B cell (primary cell): ENCODE measurements at regions of chr22 and their contacts with region 1.

Region 1: GRCh38 chr22:38353142-38353629 is 36.0 kb upstream of the CSNK1E start:
- DNase-seq: peak; percentile 78
- ATAC-seq: peak; percentile 91
- H3K4me3 ChIP-seq: no peak overlapping the region
- H3K4me3 Mint-ChIP-seq: no peak overlapping the region
- H3K27ac ChIP-seq: peak overlapping the region in 1 of 2 donors; percentile 5
- H3K27ac Mint-ChIP-seq: no peak overlapping the region
- H3K4me1 ChIP-seq: peaks cover 0 to 6% of the 10 kb centered on the region in 2 donors
- H3K4me1 Mint-ChIP-seq: peaks cover 12% of the 10 kb centered on the region
- H3K27me3 ChIP-seq: no peaks in the 10 kb centered on the region
- H3K27me3 Mint-ChIP-seq: no peaks in the 10 kb centered on the region
- CTCF ChIP-seq: peak; percentile 97

Region 2: GRCh38 chr22:38214256-38215056 is 138.7 kb before region 1 on chr22:
- CTCF ChIA-PET with region 1: interaction called, 3 read pairs
- POLR2A ChIA-PET with region 1: no interaction called
- intact Hi-C with region 1: loop called (anchors 2 kb)
- DNase-seq: peak; percentile 82
- ATAC-seq: peak; percentile 84
- H3K4me3 ChIP-seq: peak overlapping the region in 4 of 5 experiments; percentile 20 to 51 (median 34)
- H3K4me3 Mint-ChIP-seq: peak overlapping the region; percentile 78
- H3K27ac ChIP-seq: no peak overlapping the region
- H3K27ac Mint-ChIP-seq: peak overlapping the region; percentile 15
- H3K4me1 ChIP-seq: peaks cover 5 to 18% of the 10 kb centered on the region in 2 donors
- H3K4me1 Mint-ChIP-seq: peaks cover 19% of the 10 kb centered on the region
- H3K27me3 ChIP-seq: no peaks in the 10 kb centered on the region
- H3K27me3 Mint-ChIP-seq: no peaks in the 10 kb centered on the region
- CTCF ChIP-seq: peak; percentile 37

Region 3: GRCh38 chr22:38262051-38262795 is 91.0 kb before region 1 on chr22:
- CTCF ChIA-PET with region 1: interaction called, 4 read pairs
- POLR2A ChIA-PET with region 1: no interaction called
- intact Hi-C with region 1: loop called (anchors 1 kb)
- DNase-seq: peak; percentile 53
- ATAC-seq: peak; percentile 24
- H3K4me3 ChIP-seq: no peak overlapping the region
- H3K4me3 Mint-ChIP-seq: no peak overlapping the region
- H3K27ac ChIP-seq: no peak overlapping the region
- H3K27ac Mint-ChIP-seq: peak overlapping the region; percentile 33
- H3K4me1 ChIP-seq: peaks cover 3 to 26% of the 10 kb centered on the region in 2 donors
- H3K4me1 Mint-ChIP-seq: peaks cover 37% of the 10 kb centered on the region
- H3K27me3 ChIP-seq: no peaks in the 10 kb centered on the region
- H3K27me3 Mint-ChIP-seq: no peaks in the 10 kb centered on the region
- CTCF ChIP-seq: peak; percentile 30

Region 4: GRCh38 chr22:38298312-38299000 is 54.7 kb before region 1 on chr22:
- CTCF ChIA-PET with region 1: interaction called, 5 read pairs
- POLR2A ChIA-PET with region 1: no interaction called
- intact Hi-C with region 1: loop called (anchors 1 kb)
- DNase-seq: peak; percentile 58
- ATAC-seq: peak; percentile 60
- H3K4me3 ChIP-seq: no peak overlapping the region
- H3K4me3 Mint-ChIP-seq: no peak overlapping the region
- H3K27ac ChIP-seq: no peak overlapping the region
- H3K27ac Mint-ChIP-seq: no peak overlapping the region
- H3K4me1 ChIP-seq: no peaks in the 10 kb centered on the region
- H3K4me1 Mint-ChIP-seq: no peaks in the 10 kb centered on the region
- H3K27me3 ChIP-seq: no peaks in the 10 kb centered on the region
- H3K27me3 Mint-ChIP-seq: no peaks in the 10 kb centered on the region
- CTCF ChIP-seq: peak; percentile 65